MCF 10A (cell line): ENCODE measurements at regions of chr4 and their contacts with region 1.

Region 1: DNA sequence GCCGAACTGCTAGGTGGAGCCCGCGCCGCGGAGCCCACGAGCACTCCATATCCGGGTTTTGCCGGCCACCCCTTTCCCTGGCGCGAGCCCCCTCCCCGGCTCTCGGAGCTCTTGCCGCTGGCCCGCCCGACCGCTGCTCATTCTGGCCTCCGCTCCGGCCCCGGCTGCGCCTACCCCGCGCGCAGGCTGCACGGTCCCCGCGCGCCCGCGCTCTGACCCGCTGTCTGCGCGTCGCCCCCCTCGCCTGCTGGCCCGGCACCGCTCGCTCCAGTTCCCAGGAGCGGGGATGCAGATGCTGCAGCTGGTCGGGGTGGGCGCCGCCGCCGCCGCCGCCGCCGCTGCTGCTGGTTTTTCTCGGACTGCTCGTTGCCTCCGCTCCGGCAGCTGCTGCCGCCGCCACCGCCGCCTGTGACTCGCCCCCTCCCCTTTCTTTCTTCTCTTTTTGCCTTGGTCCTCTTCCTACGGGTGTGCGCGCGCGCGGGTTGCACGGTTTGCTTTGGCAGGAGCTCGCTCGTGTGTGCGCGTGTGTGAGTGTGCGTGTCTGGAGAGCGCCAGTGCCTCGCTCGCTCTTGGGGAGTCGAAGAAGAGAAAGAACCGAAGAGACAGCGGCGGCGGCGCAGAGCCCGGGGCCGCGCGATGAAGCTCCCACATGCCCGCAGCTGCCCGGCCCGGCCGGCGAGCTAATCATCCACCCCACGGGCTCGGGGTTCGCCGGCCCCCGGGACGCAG is at the start of gene ADGRL3:
- DNase-seq: peak; percentile 38
- H3K4me3 Mint-ChIP-seq: peak within 1 kb of the TSS; percentile 79
- H3K27ac Mint-ChIP-seq: no peak within 1 kb of the TSS
- H3K4me1 Mint-ChIP-seq: peaks cover 22% of the 10 kb centered on the region
- H3K27me3 Mint-ChIP-seq: no peaks in the 10 kb centered on the region
- CTCF ChIP-seq: no peak
- total RNA-seq, gene ADGRL3: 3.5 and 3.6 TPM in 2 replicates

Region 2: GRCh38 chr4:61468091-61468720 is 267.9 kb after region 1 on chr4:
- CTCF ChIA-PET with region 1: no interaction called
- POLR2A ChIA-PET with region 1: no interaction called
- intact Hi-C with region 1: loop called (anchors 10 kb)
- DNase-seq: peak; percentile 93
- H3K4me3 Mint-ChIP-seq: no peak overlapping the region
- H3K27ac Mint-ChIP-seq: peak overlapping the region; percentile 61
- H3K4me1 Mint-ChIP-seq: peaks cover 28% of the 10 kb centered on the region
- H3K27me3 Mint-ChIP-seq: no peaks in the 10 kb centered on the region
- CTCF ChIP-seq: no peak

Region 3: DNA sequence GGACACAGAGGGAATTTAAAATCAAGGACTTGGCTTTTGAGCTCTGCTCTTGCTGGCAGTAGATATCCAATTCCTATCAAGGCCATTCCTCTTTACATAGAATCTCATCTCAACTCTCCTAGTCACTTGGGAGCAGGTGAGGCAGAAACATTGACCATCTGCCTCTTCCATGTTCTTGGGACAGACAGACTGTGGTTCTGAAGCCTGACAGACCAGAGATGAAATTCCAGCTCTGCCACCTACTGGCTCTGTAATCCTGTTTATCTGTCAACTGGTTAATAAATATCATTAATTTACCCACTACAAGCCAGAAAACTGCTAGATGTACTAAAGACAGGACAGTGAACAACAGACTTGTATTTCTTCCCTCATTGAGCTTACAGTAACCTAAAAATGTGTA is 300.5 kb after region 1 on chr4:
- CTCF ChIA-PET with region 1: interaction called, 3 read pairs
- POLR2A ChIA-PET with region 1: no interaction called
- intact Hi-C with region 1: loop called (anchors 1 kb)
- DNase-seq: peak; percentile 41
- H3K4me3 Mint-ChIP-seq: no peak overlapping the region
- H3K27ac Mint-ChIP-seq: no peak overlapping the region
- H3K4me1 Mint-ChIP-seq: peaks cover 6% of the 10 kb centered on the region
- H3K27me3 Mint-ChIP-seq: no peaks in the 10 kb centered on the region
- CTCF ChIP-seq: peak; percentile 31